ENCODE measurements at regions of chr7 and their contacts with region 1.

Region 1: DNA sequence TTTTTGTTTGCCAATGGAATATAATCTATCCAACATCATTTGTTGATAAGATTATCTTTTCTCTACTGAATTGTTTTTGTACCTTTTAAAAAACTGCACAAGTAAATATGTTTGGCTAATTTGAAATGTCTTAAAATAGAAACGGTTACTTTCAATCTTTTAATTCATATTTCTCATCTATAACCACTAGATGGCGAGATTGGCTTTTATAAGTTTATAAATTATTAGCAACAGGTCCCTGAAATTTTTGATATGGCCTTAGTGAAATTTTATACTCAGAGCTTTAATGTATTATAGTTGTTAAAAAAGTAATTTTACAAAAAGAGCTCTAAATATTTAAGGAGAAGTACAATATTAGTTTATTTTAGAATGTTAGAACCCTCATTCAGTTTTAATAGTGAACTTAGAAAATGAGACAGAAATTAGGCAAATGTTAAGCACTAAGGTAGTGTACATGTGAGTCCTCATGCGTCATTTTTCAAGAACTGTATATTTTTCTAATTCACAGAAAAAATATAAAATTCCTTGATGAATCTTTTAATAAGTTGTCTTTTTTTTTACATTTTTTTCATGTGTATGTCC is 592.5 kb downstream of the ARL4A start:
- DNase-seq: peak in 2 of 5 donors; percentile 26 to 53
- H3K4me3 ChIP-seq: no peak overlapping the region
- H3K27ac ChIP-seq: no peak overlapping the region
- H3K4me1 ChIP-seq: no peaks in the 10 kb centered on the region
- H3K27me3 ChIP-seq: no peaks in the 10 kb centered on the region
- CTCF ChIP-seq: peak; percentile 8

Region 2: GRCh38 chr7:14457568-14458453 is 1177.9 kb after region 1 on chr7:
- intact Hi-C with region 1: loop called (anchors 10 kb)
- DNase-seq: peak; percentile 64 to 93 (median 81)
- H3K4me3 ChIP-seq: peak overlapping the region in 2 of 3 donors; percentile 10 to 23
- H3K27ac ChIP-seq: no peak overlapping the region
- H3K4me1 ChIP-seq: no peaks in the 10 kb centered on the region
- H3K27me3 ChIP-seq: no peaks in the 10 kb centered on the region
- CTCF ChIP-seq: peak; percentile 74

Region 3: GRCh38 chr7:14687777-14688176 is 1407.8 kb after region 1 on chr7:
- intact Hi-C with region 1: loop called (anchors 10 kb)
- DNase-seq: peak in 2 of 5 donors; percentile 55 to 67
- H3K4me3 ChIP-seq: no peak overlapping the region
- H3K27ac ChIP-seq: no peak overlapping the region
- H3K4me1 ChIP-seq: no peaks in the 10 kb centered on the region
- H3K27me3 ChIP-seq: no peaks in the 10 kb centered on the region
- CTCF ChIP-seq: no peak